ENCODE measurements at regions of chr1 and their contacts with region 1.

Region 1: GRCh38 chr1:9145021-9145668 is 16.2 kb upstream of the GPR157 start:
- DNase-seq: peak; percentile 44 to 51
- H3K4me3 ChIP-seq: no peak overlapping the region
- H3K27ac ChIP-seq: peak overlapping the region; percentile 39; the same call in 1 of the 2 replicates
- H3K4me1 ChIP-seq: peaks cover 4% of the 10 kb centered on the region; the same call in 1 of the 2 replicates
- H3K27me3 ChIP-seq: no peaks in the 10 kb centered on the region
- CTCF ChIP-seq: no peak

Region 2: GRCh38 chr1:8718850-8719361 is 426.2 kb before region 1 on chr1:
- CTCF ChIA-PET with region 1: no interaction called
- POLR2A ChIA-PET with region 1: no interaction called
- intact Hi-C with region 1: no loop called
- DNase-seq: no peak
- H3K4me3 ChIP-seq: no peak overlapping the region
- H3K27ac ChIP-seq: no peak overlapping the region
- H3K4me1 ChIP-seq: peaks cover 3% of the 10 kb centered on the region
- H3K27me3 ChIP-seq: no peaks in the 10 kb centered on the region
- CTCF ChIP-seq: no peak

Region 3: GRCh38 chr1:9196129-9197040 is 51.2 kb after region 1 on chr1:
- CTCF ChIA-PET with region 1: interaction called, 13 read pairs
- POLR2A ChIA-PET with region 1: no interaction called
- intact Hi-C with region 1: loop called (anchors 1 kb)
- DNase-seq: peak; percentile 41 to 51
- H3K4me3 ChIP-seq: no peak overlapping the region
- H3K27ac ChIP-seq: no peak overlapping the region
- H3K4me1 ChIP-seq: peaks cover 14% of the 10 kb centered on the region
- H3K27me3 ChIP-seq: no peaks in the 10 kb centered on the region
- CTCF ChIP-seq: peak; percentile 76

Region 4: DNA sequence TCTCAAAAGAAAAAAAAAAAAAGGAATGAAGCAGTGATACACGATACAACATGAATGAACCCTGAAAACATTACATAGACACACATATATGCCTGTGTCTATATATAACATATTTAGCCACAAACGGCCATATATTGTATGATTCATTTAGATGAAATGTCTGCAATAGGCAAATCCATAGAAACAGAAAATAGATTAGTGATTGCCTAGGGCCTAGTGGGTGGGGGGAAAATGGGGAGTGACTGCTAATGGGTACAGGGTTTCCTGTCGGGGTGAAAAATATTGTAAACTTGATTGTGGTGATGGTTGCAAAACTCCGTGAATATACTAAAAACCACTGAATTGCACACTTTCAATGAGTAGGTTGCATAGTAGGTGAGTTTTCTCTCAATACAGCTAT is 83.5 kb after region 1 on chr1:
- CTCF ChIA-PET with region 1: no interaction called
- POLR2A ChIA-PET with region 1: no interaction called
- intact Hi-C with region 1: no loop called
- DNase-seq: no peak
- H3K4me3 ChIP-seq: no peak overlapping the region
- H3K27ac ChIP-seq: no peak overlapping the region
- H3K4me1 ChIP-seq: peaks cover 13% of the 10 kb centered on the region
- H3K27me3 ChIP-seq: no peaks in the 10 kb centered on the region
- CTCF ChIP-seq: no peak

Region 5: GRCh38 chr1:9360371-9361064 is 215.4 kb after region 1 on chr1:
- CTCF ChIA-PET with region 1: no interaction called
- POLR2A ChIA-PET with region 1: interaction called, 13 read pairs
- intact Hi-C with region 1: no loop called
- DNase-seq: no peak
- H3K4me3 ChIP-seq: no peak overlapping the region
- H3K27ac ChIP-seq: no peak overlapping the region
- H3K4me1 ChIP-seq: no peaks in the 10 kb centered on the region
- H3K27me3 ChIP-seq: no peaks in the 10 kb centered on the region
- CTCF ChIP-seq: no peak

Region 6: GRCh38 chr1:9539165-9539828 is 394.2 kb after region 1 on chr1 and contains the start of gene SLC25A33:
- CTCF ChIA-PET with region 1: interaction called, 11 read pairs
- POLR2A ChIA-PET with region 1: no interaction called
- intact Hi-C with region 1: no loop called
- DNase-seq: peak; percentile 73 to 98
- H3K4me3 ChIP-seq: peak within 1 kb of the TSS; percentile 66
- H3K27ac ChIP-seq: no peak within 1 kb of the TSS
- H3K4me1 ChIP-seq: peaks cover 14% of the 10 kb centered on the region
- H3K27me3 ChIP-seq: no peaks in the 10 kb centered on the region
- CTCF ChIP-seq: no peak
- total RNA-seq, gene SLC25A33: 3.0 and 4.4 TPM in 2 replicates

Measured in PC-9 (cell line).